CD8-positive, alpha-beta T cell (primary cell): ENCODE measurements at regions of chr5 and their contacts with region 1.

Region 1: DNA sequence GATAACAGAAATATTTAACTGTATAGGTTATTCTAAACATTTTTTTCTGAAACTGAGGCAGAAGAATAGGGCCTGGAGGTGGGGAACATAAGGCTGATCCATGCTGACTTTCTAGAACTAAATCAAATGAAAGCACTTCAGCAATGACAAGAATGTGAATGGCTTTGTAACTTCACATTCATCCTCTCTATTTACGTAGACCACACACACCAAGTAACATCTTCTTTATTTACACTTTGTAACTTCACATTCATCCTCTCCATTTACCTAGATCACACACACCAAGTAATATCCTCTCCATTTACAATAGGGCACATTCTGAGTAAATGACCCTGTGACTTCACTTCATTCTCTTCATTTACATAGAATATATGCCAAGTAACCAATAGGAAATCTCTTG is 251.8 kb upstream of the CDH9 start:
- DNase-seq: no peak
- ATAC-seq: no peak
- H3K4me3 ChIP-seq: no peak overlapping the region
- H3K4me3 Mint-ChIP-seq: no peak overlapping the region
- H3K27ac ChIP-seq: no peak overlapping the region
- H3K27ac Mint-ChIP-seq: no peak overlapping the region
- H3K4me1 ChIP-seq: no peaks in the 10 kb centered on the region
- H3K4me1 Mint-ChIP-seq: no peaks in the 10 kb centered on the region
- H3K27me3 ChIP-seq: no peaks in the 10 kb centered on the region
- H3K27me3 Mint-ChIP-seq: no peaks in the 10 kb centered on the region
- CTCF ChIP-seq: no peak

Region 2: DNA sequence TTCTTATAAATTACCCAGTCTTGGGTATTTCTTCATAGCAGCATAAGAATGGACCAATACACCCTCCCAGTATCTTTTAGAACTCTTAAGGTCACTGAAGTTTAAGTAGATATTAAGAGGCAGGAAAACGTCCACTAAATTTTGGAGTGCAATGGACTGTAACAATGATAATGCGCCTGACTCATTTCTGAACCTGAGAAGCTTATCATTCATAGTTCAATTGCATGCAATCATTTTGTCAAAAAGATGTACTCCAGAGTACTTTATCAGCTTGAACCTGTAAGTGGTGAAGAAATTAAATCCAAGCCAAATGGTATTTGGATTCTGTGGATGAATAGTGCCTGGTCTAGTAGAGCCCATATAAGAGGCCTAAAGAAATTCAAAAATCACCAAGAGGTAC is 55.3 kb before region 1 on chr5:
- CTCF ChIA-PET with region 1: no interaction called
- POLR2A ChIA-PET with region 1: no interaction called
- intact Hi-C with region 1: no loop called
- DNase-seq: no peak
- ATAC-seq: no peak
- H3K4me3 ChIP-seq: no peak overlapping the region
- H3K4me3 Mint-ChIP-seq: no peak overlapping the region
- H3K27ac ChIP-seq: no peak overlapping the region
- H3K27ac Mint-ChIP-seq: no peak overlapping the region
- H3K4me1 ChIP-seq: no peaks in the 10 kb centered on the region
- H3K4me1 Mint-ChIP-seq: no peaks in the 10 kb centered on the region
- H3K27me3 ChIP-seq: no peaks in the 10 kb centered on the region
- H3K27me3 Mint-ChIP-seq: no peaks in the 10 kb centered on the region
- CTCF ChIP-seq: no peak

Region 3: DNA sequence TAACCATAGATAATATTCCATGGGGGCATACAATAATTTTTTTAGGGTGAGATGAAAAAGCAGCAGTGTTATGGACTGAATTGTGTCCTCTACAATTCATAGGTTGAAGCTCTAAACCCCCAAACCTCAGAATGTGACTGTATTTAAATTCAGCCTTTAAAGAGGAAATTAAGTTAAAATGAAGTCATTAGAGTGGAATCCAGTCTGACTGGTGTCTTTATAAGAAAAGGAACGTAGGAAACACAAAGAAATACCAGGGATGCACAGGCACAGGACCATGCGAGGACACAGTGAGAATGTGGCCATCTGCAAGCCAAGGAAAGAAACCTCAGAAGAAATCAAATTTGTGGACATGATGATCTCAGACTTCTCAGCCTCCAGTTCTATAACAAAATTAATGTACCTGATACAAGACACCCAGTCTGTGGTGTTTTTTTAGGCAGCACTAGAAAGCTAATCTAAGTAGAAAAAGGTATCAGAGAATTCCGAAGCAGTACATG is 719.4 kb after region 1 on chr5:
- CTCF ChIA-PET with region 1: no interaction called
- POLR2A ChIA-PET with region 1: no interaction called
- intact Hi-C with region 1: loop called in 1 of 2 experiments (anchors 5 kb)
- DNase-seq: no peak
- ATAC-seq: no peak
- H3K4me3 ChIP-seq: no peak overlapping the region
- H3K4me3 Mint-ChIP-seq: no peak overlapping the region
- H3K27ac ChIP-seq: no peak overlapping the region
- H3K27ac Mint-ChIP-seq: no peak overlapping the region
- H3K4me1 ChIP-seq: no peaks in the 10 kb centered on the region
- H3K4me1 Mint-ChIP-seq: no peaks in the 10 kb centered on the region
- H3K27me3 ChIP-seq: no peaks in the 10 kb centered on the region
- H3K27me3 Mint-ChIP-seq: no peaks in the 10 kb centered on the region
- CTCF ChIP-seq: no peak